ENCODE measurements at regions of chr5 and their contacts with region 1.

Region 1: GRCh38 chr5:142151436-142152383 is 43.1 kb downstream of the NDFIP1 start:
- DNase-seq: peak; percentile 48 to 49
- H3K4me3 ChIP-seq: no peak overlapping the region
- H3K27ac ChIP-seq: no peak overlapping the region
- H3K4me1 ChIP-seq: peaks cover 9% of the 10 kb centered on the region; the same call in 1 of the 2 replicates
- H3K27me3 ChIP-seq: no peaks in the 10 kb centered on the region
- CTCF ChIP-seq: peak; percentile 92

Region 2: DNA sequence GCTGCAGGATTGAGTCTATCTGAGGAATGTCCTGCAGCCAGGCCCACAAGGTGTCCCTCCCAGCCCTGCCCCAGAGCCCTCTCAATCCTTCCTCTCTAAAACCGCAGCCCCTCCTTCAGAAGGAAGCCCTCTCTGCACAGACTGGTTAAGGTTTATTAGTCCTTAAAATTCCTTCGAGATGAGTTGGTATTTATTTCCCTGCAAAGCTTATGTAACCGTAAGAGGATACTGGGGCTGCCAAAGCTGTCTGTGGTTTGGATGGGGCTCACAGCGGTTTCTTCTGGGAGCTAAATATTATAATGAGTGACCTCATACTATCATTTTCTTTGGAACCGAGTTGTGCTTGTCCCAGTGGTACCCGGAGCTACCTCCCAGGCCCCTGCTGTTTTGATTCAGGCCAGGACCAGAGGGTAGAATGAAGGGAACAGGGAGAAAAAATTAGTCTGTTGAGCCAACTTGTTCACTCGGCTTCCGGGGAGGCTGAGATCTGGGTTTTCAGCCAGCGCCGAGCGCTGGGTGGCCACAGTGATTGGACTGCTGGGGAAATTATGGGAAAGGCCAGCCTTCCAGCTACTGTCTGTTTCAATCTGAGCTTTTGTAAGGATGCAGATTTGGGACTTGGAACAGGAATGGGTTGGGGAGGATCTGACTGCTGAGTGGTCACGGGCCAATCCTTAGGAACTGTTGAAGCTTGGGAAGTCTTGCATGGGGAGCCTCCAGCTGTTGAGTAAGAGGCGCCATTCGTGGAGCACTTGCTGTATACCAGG is 64.4 kb after region 1 on chr5:
- CTCF ChIA-PET with region 1: no interaction called
- POLR2A ChIA-PET with region 1: no interaction called
- intact Hi-C with region 1: loop called (anchors 1 kb)
- DNase-seq: peak; percentile 83 to 99
- H3K4me3 ChIP-seq: peak overlapping the region; percentile 34; the same call in 1 of the 2 replicates
- H3K27ac ChIP-seq: peak overlapping the region; percentile 62
- H3K4me1 ChIP-seq: peaks cover 41% of the 10 kb centered on the region
- H3K27me3 ChIP-seq: no peaks in the 10 kb centered on the region
- CTCF ChIP-seq: no peak

Region 3: DNA sequence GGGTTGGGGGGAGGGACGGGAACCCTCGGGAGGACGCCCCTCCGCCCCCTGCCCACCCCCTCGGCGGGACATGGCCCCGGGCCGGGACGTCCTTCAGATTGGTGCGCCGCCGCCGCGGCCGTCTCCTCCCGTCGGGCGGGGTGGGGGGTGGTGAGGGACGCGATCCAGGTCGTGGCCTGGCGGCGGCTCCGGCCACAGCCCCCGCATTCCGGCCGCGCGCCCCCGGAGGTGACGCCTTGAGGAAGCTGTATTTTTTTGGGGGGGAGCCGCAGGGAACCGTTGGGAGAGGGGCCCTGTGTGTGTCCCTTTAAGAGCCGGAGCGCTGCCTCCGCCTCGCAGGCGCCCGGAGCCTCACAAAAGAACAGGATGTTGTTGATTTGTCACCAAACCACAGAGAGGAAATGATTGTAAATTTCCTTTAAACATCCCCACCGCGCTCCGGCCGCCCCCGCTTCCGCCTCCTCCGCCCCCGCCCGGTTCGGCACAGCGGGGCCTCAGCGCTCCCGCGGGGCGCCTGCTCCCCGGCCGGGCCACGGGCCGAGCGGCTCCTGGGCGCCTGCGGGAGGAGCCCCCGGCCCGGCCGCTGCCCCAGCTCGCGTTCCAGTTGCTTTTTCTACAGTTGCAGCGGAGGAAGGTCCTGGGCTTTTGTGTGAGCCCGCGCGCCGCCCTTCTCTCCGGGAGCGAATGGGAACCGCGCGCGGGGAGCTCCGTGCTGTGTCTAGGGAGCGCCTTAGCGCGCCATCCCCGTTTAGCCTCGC is 205.2 kb after region 1 on chr5:
- CTCF ChIA-PET with region 1: no interaction called
- POLR2A ChIA-PET with region 1: no interaction called
- intact Hi-C with region 1: loop called (anchors 2 kb)
- DNase-seq: peak; percentile 81 to 87
- H3K4me3 ChIP-seq: peak overlapping the region; percentile 65; the same call in 1 of the 2 replicates
- H3K27ac ChIP-seq: peak overlapping the region; percentile 93
- H3K4me1 ChIP-seq: peaks cover 68% of the 10 kb centered on the region
- H3K27me3 ChIP-seq: no peaks in the 10 kb centered on the region
- CTCF ChIP-seq: no peak

Region 4: GRCh38 chr5:142611154-142611553 is 459.4 kb after region 1 on chr5:
- CTCF ChIA-PET with region 1: no interaction called
- POLR2A ChIA-PET with region 1: no interaction called
- intact Hi-C with region 1: loop called (anchors 2 kb)
- DNase-seq: peak; percentile 49 to 72
- H3K4me3 ChIP-seq: no peak overlapping the region
- H3K27ac ChIP-seq: no peak overlapping the region
- H3K4me1 ChIP-seq: no peaks in the 10 kb centered on the region
- H3K27me3 ChIP-seq: no peaks in the 10 kb centered on the region
- CTCF ChIP-seq: peak; percentile 79

Region 5: DNA sequence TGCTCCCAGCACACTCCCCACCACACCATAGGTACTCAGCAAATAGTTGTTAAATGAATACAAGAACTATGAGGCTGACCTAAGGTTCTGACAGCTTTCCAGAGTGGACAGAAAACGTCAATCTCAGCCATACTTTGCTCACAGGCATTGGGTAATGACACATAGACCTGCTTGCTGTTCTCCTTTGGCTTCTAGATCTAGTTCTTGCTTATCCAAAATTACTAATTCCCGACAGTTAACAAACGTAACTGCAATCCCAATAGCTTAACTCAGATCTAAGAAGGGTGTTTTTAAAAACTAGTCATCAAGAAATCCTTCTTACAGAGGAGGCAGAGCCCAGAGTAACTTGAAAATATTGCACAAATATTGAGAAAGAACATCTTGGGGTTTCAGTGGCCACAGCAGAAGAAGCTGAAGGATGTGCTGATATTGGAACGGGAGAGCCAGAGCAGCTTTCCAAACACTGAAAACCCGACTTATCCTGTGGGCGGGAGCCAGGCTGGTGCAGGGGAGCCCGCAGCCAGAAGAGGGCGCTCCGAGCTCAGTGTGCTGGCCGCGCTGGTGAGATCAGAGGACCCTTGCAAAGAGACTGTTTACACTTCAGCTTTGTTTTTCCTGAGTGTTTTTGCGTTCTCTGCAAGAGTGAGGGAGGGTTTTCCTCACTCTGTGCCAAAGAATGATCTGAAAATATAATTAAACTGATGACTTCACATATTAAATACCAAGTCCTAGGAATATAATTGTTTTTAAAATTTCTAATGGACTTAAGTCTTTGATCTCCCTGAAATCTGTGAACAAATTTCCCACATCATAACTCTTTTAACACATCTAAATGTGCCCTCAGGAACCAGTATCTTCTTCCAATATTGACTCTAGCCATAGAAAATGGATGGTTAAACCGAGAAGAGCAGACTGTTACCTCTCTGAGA is 503.9 kb after region 1 on chr5:
- CTCF ChIA-PET with region 1: no interaction called
- POLR2A ChIA-PET with region 1: no interaction called
- intact Hi-C with region 1: loop called (anchors 1 kb)
- DNase-seq: peak; percentile 52 to 78
- H3K4me3 ChIP-seq: no peak overlapping the region
- H3K27ac ChIP-seq: no peak overlapping the region
- H3K4me1 ChIP-seq: no peaks in the 10 kb centered on the region
- H3K27me3 ChIP-seq: no peaks in the 10 kb centered on the region
- CTCF ChIP-seq: peak; percentile 97

Region 6: GRCh38 chr5:142699184-142699720 is 547.5 kb after region 1 on chr5:
- CTCF ChIA-PET with region 1: no interaction called
- POLR2A ChIA-PET with region 1: no interaction called
- intact Hi-C with region 1: loop called (anchors 1 kb)
- DNase-seq: peak; percentile 73 to 80
- H3K4me3 ChIP-seq: no peak overlapping the region
- H3K27ac ChIP-seq: no peak overlapping the region
- H3K4me1 ChIP-seq: peaks cover 12% of the 10 kb centered on the region
- H3K27me3 ChIP-seq: no peaks in the 10 kb centered on the region
- CTCF ChIP-seq: peak; percentile 98

Region 7: DNA sequence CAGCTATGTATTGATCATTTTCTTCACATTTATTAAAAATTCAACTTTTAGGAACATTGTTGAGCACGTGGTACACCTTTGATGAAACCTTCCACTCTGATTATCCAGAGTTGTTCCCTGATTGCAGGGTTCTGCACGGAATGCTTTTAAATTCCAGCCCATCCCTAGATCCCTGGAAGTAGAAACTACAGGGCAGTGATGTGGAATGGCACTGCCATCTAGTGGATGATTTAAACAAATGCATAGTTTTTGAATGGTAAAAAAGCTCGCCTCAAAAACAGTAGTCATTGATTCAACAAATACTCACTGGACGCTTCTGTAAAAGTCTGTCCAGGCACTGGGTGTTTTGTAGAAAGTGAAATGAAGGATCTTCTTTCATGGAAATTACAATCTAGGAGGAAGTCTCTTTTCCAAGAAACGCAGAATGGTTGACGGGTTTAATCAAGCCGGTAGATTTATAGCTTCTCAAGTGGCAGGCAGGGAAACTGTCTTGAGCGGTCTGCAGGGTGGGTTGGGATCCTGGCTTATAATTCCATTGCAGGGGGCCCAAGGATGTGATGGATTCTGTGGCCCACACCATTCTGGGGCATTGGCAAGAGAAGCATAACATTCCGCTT is 736.9 kb after region 1 on chr5:
- CTCF ChIA-PET with region 1: no interaction called
- POLR2A ChIA-PET with region 1: no interaction called
- intact Hi-C with region 1: loop called (anchors 10 kb)
- DNase-seq: peak; percentile 28 to 50
- H3K4me3 ChIP-seq: no peak overlapping the region
- H3K27ac ChIP-seq: no peak overlapping the region
- H3K4me1 ChIP-seq: peaks cover 28% of the 10 kb centered on the region
- H3K27me3 ChIP-seq: no peaks in the 10 kb centered on the region
- CTCF ChIP-seq: peak; percentile 83